MCF 10A (cell line): ENCODE measurements at regions of chr2 and their contacts with region 1.

Region 1: GRCh38 chr2:127324635-127325034 is 30.7 kb upstream of the ERCC3 start:
- DNase-seq: peak; percentile 54
- H3K4me3 Mint-ChIP-seq: no peak overlapping the region
- H3K27ac Mint-ChIP-seq: no peak overlapping the region
- H3K4me1 Mint-ChIP-seq: no peaks in the 10 kb centered on the region
- H3K27me3 Mint-ChIP-seq: no peaks in the 10 kb centered on the region
- CTCF ChIP-seq: peak; percentile 61

Region 2: DNA sequence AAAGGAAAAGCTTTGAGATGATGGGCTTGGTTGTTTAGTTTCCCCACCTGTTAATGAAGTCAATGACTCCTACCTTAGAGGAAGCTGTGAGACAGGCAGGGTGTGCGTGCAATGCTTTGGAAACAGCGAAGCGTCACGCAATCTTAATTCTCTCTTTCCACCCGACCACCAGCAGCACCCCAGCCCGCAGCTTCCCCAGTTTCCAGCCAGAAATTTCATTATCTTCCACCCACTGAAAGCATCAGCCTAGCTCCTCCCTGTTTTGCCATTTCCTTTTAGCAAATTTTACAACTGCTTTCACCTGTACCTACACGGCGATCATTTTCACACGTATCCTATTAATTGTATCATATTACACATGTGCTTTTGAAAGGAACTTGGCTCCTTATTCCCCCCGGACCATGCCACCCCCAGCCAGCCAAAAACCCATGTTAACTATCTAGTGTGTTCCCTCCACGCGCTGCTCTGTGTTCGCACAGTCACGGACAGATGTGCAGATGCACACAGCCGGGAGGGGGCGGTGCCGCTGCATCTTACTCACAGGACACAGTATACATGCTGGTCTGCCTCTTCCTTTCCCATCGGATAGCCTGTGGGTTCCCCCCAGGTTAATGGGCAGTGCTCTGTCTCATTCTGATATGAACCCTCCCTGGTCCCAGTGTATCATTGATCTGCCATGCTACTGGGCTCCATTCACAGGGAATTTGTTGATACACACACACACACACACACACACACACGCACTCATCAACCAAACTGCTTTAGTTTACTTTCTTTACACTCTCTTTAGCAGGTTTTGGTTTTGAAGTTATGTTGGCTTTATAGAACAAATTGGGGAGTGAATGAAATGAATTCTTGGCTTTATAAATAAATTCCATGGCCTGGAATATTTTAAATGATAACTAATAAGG is 126.9 kb before region 1 on chr2:
- CTCF ChIA-PET with region 1: interaction called, 4 read pairs
- POLR2A ChIA-PET with region 1: no interaction called
- intact Hi-C with region 1: loop called (anchors 5 kb)
- DNase-seq: peak; percentile 77
- H3K4me3 Mint-ChIP-seq: peak overlapping the region; percentile 9
- H3K27ac Mint-ChIP-seq: no peak overlapping the region
- H3K4me1 Mint-ChIP-seq: peaks cover 6% of the 10 kb centered on the region
- H3K27me3 Mint-ChIP-seq: no peaks in the 10 kb centered on the region
- CTCF ChIP-seq: peak; percentile 77

Region 3: DNA sequence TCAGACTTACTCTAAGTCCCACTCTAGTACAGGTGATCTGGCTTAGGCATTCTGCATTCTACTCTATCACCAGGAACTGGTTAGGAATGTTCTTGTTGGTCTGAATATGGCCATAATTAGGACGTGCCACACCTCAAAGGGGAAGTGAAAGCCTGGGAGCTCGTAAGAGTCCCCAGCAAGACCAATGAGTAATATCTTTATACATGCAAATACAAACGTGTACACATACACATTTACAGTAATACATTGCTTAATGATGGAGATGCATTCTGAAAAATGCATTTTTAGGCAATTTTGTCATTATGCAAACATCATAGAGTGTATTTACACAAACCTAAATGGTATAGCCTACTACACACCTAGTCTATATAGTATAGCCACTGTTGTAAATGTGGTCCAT is 11.2 kb before region 1 on chr2:
- CTCF ChIA-PET with region 1: interaction called, 11 read pairs
- POLR2A ChIA-PET with region 1: no interaction called
- intact Hi-C with region 1: no loop called
- DNase-seq: no peak
- H3K4me3 Mint-ChIP-seq: no peak overlapping the region
- H3K27ac Mint-ChIP-seq: no peak overlapping the region
- H3K4me1 Mint-ChIP-seq: no peaks in the 10 kb centered on the region
- H3K27me3 Mint-ChIP-seq: no peaks in the 10 kb centered on the region
- CTCF ChIP-seq: no peak